ENCODE measurements at regions of chr10 and their contacts with region 1.

Region 1: DNA sequence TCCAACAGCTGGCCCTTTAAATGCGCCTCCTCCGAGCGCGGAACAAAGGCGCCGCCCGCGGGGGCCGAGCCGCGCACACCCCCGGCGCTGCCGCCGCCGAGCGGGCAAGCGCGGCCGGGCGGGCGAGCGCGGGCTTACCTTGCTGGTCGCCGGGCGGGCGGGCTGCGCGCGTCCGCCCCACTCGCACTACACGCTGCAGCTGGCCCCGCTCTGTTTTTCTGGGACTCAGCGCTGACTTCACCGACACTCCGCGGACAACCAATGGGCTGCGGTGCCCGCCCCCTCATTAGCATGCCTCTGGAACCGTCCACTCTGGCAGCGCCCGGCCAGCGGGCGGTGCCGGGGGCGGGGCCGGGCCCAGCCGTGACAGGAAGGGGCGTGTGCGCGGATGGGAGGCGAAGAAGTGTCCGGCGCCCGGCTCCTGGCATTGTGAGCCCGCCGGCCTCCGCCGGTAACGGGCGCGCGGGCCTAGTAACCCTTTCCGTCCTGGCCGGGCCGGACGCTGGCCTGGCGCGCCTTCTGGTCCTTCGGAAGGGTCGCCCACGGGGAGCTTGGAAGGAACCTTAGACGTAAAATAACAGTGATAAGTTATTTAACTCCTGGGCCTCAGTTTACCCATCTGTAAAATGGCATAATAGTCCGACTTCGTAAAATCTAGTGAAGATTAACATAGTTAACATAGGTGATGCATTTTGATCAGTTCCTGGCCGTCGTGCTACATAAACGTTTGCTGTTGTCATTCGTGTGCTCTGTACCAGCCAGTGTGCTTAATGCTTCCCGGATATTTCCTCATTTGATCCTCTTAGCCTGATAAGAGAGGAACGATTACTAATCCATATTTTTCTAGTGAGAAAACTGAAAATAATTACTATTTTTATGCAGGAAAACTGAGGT is at the start of gene SORBS1:
- DNase-seq: peak; percentile 96
- ATAC-seq: peak; percentile 97 to 99 (median 98)
- H3K4me3 ChIP-seq: peak within 1 kb of the TSS; percentile 85 to 99 (median 92)
- H3K27ac ChIP-seq: peak within 1 kb of the TSS; percentile 81 to 94 (median 90)
- H3K4me1 ChIP-seq: peaks cover 3 to 51% (median 27%) of the 10 kb centered on the region in 9 donors
- H3K27me3 ChIP-seq: peaks cover 0 to 8% (median 0%) of the 10 kb centered on the region in 7 donors
- CTCF ChIP-seq: no peak
- total RNA-seq, gene SORBS1: 528 to 1,253 (median 1,130) TPM

Region 2: DNA sequence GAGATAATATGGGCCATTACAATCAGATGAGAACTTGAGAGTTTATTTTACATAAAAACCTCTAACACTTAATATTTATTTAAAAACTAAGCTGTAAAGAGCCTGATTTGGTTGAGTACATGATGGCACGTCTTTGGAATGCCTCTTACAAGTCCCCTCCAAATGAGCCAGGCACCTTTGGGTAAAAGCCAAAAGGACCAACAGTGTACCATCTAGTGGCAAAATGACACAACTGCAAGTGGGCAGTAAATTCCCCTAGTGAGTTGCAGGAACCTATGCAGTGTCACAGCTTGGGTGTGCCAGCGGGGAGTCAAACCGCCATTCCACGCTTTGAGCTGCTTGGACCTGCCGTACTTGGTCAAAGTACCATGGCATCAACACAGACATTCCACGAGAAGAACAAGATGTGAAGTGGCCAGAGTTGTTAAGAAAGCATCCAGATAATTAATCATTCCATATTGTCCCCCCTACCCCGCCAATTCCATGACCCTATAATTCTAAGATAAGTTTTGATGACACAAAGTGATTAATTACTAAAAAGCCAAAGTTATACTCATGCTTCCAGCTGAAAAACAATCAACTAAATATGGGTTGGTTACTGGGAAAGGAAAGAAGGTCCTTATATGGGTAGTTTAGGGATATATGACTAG is 115.5 kb before region 1 on chr10:
- intact Hi-C with region 1: loop called in 3 of 10 experiments (anchors 5 to 10 kb)
- DNase-seq: peak in 1 of 2 donors; percentile 68
- ATAC-seq: peak; percentile 34 to 61 (median 48)
- H3K4me3 ChIP-seq: peak overlapping the region in 1 of 10 donors; percentile 1
- H3K27ac ChIP-seq: peak overlapping the region; percentile 62 to 92 (median 84)
- H3K4me1 ChIP-seq: peaks cover 26 to 99% (median 75%) of the 10 kb centered on the region in 9 donors
- H3K27me3 ChIP-seq: no peaks in the 10 kb centered on the region
- CTCF ChIP-seq: peak; percentile 63 to 88 (median 75)

Region 3: GRCh38 chr10:95493862-95494261 is 67.6 kb before region 1 on chr10:
- intact Hi-C with region 1: loop called in 1 of 10 experiments (anchors 5 kb)
- DNase-seq: no peak
- ATAC-seq: no peak
- H3K4me3 ChIP-seq: no peak overlapping the region
- H3K27ac ChIP-seq: peak overlapping the region in 9 of 10 donors; percentile 1 to 83 (median 61)
- H3K4me1 ChIP-seq: peaks cover 7 to 79% (median 55%) of the 10 kb centered on the region in 9 donors
- H3K27me3 ChIP-seq: no peaks in the 10 kb centered on the region
- CTCF ChIP-seq: no peak

Region 4: DNA sequence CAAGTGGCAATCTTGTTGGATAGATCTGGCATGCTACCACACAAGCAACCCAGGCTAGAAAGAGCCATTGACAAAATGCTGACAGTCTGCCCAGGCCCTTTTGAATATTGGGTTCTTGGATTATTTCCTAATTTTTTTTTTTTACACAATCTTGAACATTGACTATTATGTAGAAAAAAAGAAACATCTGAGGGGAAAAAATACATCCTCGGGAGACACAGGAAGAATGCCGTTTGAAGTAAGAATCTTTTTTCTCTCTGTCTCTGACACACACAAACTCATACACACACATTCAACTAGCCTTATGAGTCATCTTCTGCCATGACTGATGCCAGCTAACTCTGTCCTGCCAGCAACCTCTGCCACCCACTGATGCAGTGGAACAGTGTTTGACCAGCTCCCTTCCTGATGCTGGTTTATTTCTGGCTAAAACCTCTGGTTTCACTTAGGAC is 47.5 kb before region 1 on chr10:
- intact Hi-C with region 1: loop called in 3 of 10 experiments (anchors 5 to 10 kb)
- DNase-seq: peak; percentile 25 to 51
- ATAC-seq: peak; percentile 44 to 78 (median 70)
- H3K4me3 ChIP-seq: no peak overlapping the region
- H3K27ac ChIP-seq: peak overlapping the region; percentile 8 to 85 (median 72)
- H3K4me1 ChIP-seq: peaks cover 19 to 99% (median 84%) of the 10 kb centered on the region in 9 donors
- H3K27me3 ChIP-seq: no peaks in the 10 kb centered on the region
- CTCF ChIP-seq: no peak